GM12878 (cell line): ENCODE measurements at regions of chr4 and their contacts with region 1.

Region 1: DNA sequence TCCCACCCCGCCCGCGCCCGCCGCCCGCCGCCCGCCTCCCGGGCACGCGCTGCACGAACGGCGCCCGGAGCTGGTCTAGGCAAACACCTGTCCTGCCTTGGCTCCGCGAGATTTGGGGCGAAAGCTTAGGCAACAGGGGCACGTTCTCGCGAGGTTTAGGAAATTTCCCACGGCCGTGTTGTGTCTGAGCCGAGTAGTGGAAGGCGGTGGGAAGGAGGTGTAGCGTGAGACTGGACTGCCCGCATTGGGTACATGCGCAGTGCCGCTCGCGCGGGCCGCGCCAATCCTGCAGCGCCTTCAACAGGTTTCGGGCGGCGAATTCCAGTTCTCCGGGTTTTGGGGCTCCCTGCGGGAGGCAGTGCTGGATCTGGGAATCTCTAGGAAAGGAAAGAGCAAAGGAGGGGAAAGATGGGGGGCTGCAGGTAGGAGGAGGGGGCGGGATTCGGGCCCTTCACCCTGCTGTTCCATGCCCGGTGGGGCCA is 1.3 kb upstream of the RBPJ start:
- DNase-seq: peak; percentile 99
- ATAC-seq: peak; percentile 81
- H3K4me3 ChIP-seq: peak overlapping the region; percentile 94
- H3K27ac ChIP-seq: peak overlapping the region; percentile 97
- H3K4me1 ChIP-seq: no peaks in the 10 kb centered on the region
- H3K27me3 ChIP-seq: no peaks in the 10 kb centered on the region
- CTCF ChIP-seq: peak in 2 of 3 experiments; percentile 23 to 71; a peak in 3 of 6 replicates
- EP300 ChIP-seq: no peak
- POLR2A ChIP-seq: peak; percentile 74
- RAD21 ChIP-seq: no peak

Region 2: DNA sequence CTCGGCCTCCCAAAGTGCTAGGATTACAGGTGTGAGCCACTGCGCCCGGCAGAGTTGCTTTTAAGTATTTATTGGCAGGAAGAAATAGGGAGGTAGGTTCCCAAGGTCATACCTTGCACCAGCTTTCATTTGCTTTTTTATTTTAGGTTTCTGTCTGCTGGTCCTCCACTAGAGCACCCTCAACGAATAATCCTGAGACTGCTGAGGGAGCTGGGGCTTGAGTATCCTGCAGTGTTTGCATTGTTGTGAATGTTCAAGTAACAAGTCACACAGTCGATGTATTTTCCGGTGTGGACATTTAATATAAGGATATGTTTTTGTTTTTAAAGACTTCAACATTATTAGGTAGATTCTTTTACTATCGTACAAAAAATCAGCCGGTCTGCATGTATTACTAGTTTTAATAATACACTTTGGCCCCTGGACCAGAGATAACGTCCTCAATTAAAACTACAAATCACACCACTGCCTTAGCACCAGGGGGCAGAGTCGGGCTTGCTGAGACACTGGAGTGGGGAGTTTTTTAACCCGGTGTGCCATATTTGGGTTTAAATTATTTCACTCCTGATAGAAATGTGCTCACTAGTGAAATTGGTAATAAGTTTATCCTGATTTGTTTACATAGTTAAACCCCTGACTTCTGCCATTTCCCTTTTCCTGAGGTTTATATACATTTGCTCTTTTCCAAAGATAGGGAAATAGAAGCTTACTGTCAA is 393.9 kb before region 1 on chr4:
- CTCF ChIA-PET with region 1: interaction called, 3 read pairs
- POLR2A ChIA-PET with region 1: no interaction called
- RAD21 ChIA-PET with region 1: no interaction called
- SMC1A ChIA-PET with region 1: interaction called, 3 read pairs
- in situ Hi-C with region 1: no loop called
- intact Hi-C with region 1: loop called (anchors 5 kb)
- DNase-seq: no peak
- ATAC-seq: peak; percentile 94
- H3K4me3 ChIP-seq: no peak overlapping the region
- H3K27ac ChIP-seq: no peak overlapping the region
- H3K4me1 ChIP-seq: no peaks in the 10 kb centered on the region
- H3K27me3 ChIP-seq: no peaks in the 10 kb centered on the region
- CTCF ChIP-seq: peak; percentile 65 to 71 (median 69)
- EP300 ChIP-seq: no peak
- POLR2A ChIP-seq: no peak
- RAD21 ChIP-seq: peak; percentile 89

Region 3: DNA sequence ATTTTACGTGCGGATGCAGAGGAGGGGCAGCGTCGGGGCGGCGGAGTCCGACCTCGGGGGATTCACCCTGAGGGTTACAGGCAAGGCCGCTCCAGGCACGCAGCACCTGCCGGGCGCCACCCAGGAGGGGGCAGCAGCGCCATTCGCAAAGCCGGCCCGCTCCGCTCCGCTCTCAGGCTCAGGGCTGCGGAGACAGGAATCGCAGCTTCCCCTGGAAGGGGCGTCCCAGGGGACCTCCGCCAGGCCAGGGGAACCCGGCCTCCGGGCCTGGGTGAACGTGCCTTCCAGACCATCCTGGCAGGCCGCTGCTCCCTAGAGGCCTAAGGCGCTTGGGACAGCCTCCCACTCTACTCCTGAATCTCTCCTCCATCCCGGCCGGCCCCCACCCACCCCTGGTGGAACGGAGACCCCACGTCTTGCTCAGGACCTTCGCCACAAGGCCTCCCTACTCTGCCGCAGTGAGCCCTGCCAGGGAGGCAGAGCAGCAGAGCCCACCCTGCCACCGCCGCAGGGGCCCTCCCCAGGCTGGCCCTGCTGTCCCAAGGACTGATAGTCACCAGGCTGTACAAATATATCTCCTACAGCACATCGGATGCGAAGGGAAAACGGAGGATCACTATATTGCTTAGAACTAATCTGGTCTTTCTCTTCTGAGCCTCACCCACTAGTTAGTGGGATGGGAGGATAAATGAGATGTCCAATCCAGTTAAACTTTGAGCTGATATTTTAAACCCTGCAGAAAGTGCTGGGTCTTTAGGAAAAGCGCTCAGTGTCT is 290.5 kb before region 1 on chr4:
- CTCF ChIA-PET with region 1: interaction called, 3 read pairs
- POLR2A ChIA-PET with region 1: no interaction called
- RAD21 ChIA-PET with region 1: interaction called, 15 read pairs
- SMC1A ChIA-PET with region 1: interaction called, 6 read pairs
- in situ Hi-C with region 1: no loop called
- intact Hi-C with region 1: no loop called
- DNase-seq: no peak
- ATAC-seq: peak; percentile 99
- H3K4me3 ChIP-seq: no peak overlapping the region
- H3K27ac ChIP-seq: no peak overlapping the region
- H3K4me1 ChIP-seq: peaks cover 4% of the 10 kb centered on the region
- H3K27me3 ChIP-seq: no peaks in the 10 kb centered on the region
- CTCF ChIP-seq: peak; percentile 75 to 89 (median 85)
- EP300 ChIP-seq: no peak
- POLR2A ChIP-seq: no peak
- RAD21 ChIP-seq: peak; percentile 93

Region 4: DNA sequence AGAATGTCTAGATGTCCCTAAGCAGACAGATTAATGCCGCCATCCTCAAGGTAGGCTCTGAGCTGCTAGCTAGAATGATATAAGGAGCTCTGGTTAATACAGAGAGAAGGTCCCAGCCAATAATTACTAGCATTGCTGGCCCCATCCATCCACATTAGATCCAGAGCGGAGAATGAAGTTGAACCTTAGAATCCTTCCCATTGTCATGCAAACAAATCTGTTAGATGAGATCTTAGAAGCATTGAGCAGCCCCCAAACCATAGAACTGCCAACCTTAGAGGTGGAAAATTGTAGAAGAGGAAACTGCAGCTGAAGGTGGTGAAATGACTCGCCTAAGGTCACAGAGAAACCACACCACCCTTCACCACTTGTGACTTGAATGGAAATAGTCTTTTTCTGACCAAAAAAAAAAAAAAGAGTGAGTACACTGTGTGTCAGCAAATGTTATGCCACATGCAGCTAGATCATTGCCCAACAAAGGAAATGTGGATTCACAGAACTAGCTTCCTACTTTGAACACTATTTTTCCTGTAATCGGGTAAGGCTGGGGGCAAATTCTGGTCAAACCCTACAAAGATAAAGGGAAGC is 243.4 kb before region 1 on chr4:
- CTCF ChIA-PET with region 1: interaction called, 29 read pairs
- POLR2A ChIA-PET with region 1: interaction called, 7 read pairs
- RAD21 ChIA-PET with region 1: interaction called, 37 read pairs
- SMC1A ChIA-PET with region 1: interaction called, 24 read pairs
- in situ Hi-C with region 1: loop called (anchors 5 kb)
- intact Hi-C with region 1: no loop called
- DNase-seq: peak; percentile 84
- ATAC-seq: peak; percentile 75
- H3K4me3 ChIP-seq: no peak overlapping the region
- H3K27ac ChIP-seq: peak overlapping the region; percentile 57
- H3K4me1 ChIP-seq: peaks cover 35% of the 10 kb centered on the region
- H3K27me3 ChIP-seq: no peaks in the 10 kb centered on the region
- CTCF ChIP-seq: no peak
- EP300 ChIP-seq: peak; percentile 70 to 90
- POLR2A ChIP-seq: no peak
- RAD21 ChIP-seq: no peak

Region 5: DNA sequence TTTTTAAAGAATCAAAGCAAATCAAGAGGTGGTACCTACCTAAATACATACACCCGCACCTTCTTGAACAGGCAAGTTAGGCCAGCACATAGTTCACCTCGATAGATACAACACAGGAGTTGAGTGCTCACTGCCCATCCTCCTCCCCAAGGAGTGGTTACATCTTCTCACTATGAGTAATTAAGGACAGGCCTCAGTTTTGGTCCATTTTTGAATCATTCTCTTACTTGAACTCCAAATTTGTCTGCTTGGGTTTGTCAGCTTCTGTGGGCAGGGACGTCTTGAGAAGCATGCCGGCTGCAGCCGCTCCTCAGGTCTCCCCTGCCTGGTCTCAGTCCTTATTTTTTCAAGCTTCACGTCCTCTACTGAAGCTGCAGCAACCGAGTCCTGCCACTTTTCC is 189.3 kb before region 1 on chr4:
- CTCF ChIA-PET with region 1: no interaction called
- POLR2A ChIA-PET with region 1: no interaction called
- RAD21 ChIA-PET with region 1: interaction called, 6 read pairs
- SMC1A ChIA-PET with region 1: interaction called, 4 read pairs
- in situ Hi-C with region 1: loop called (anchors 5 kb)
- intact Hi-C with region 1: no loop called
- DNase-seq: peak; percentile 90
- ATAC-seq: peak; percentile 79
- H3K4me3 ChIP-seq: no peak overlapping the region
- H3K27ac ChIP-seq: peak overlapping the region; percentile 60
- H3K4me1 ChIP-seq: peaks cover 52% of the 10 kb centered on the region
- H3K27me3 ChIP-seq: no peaks in the 10 kb centered on the region
- CTCF ChIP-seq: no peak
- EP300 ChIP-seq: peak; percentile 78 to 79; a peak in 3 of 4 replicates
- POLR2A ChIP-seq: no peak
- RAD21 ChIP-seq: peak; percentile 30; the same call in 1 of the 2 replicates

Region 6: DNA sequence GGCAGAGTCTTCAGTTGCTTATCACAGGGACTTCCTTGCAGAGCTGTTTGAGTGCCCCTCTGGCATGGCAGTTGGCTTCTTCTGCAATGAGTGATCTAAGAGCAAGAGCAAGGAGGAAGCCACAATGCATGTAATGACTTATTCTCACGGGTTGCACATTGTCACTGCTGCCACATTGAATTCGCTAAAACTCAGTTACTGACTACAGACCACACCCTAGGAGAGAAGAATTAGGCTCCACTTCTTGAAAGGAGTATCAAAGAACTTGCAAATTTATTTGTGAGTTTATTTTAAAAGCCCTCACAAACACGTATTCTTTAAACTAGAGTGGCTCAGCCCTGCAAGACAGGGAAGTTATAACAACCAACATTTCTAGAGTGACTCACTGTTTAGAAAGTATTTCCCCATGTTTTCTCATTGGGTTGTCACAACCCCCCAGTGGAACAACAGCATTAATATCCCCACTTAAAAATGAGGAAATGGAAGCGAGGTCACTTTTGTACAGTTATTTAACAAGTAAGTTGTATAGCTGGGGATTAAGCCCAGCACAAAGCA is 31.1 kb before region 1 on chr4:
- CTCF ChIA-PET with region 1: interaction called, 4 read pairs
- POLR2A ChIA-PET with region 1: interaction called, 3 read pairs
- RAD21 ChIA-PET with region 1: interaction called, 11 read pairs
- SMC1A ChIA-PET with region 1: interaction called, 8 read pairs
- in situ Hi-C with region 1: no loop called
- intact Hi-C with region 1: loop called (anchors 1 kb)
- DNase-seq: peak; percentile 73
- ATAC-seq: peak; percentile 91
- H3K4me3 ChIP-seq: no peak overlapping the region
- H3K27ac ChIP-seq: peak overlapping the region; percentile 79
- H3K4me1 ChIP-seq: peaks cover 15% of the 10 kb centered on the region
- H3K27me3 ChIP-seq: no peaks in the 10 kb centered on the region
- CTCF ChIP-seq: no peak
- EP300 ChIP-seq: 0 out of 4 replicates have a peak, but pooled peaks of 1 of the 2 experiments have one; percentile 14
- POLR2A ChIP-seq: 0 out of 2 replicates have a peak, but pooled peaks have one; percentile 29
- RAD21 ChIP-seq: no peak

Region 7: GRCh38 chr4:26613237-26613636 is 293.7 kb after region 1 on chr4:
- CTCF ChIA-PET with region 1: no interaction called
- POLR2A ChIA-PET with region 1: no interaction called
- RAD21 ChIA-PET with region 1: no interaction called
- SMC1A ChIA-PET with region 1: no interaction called
- in situ Hi-C with region 1: no loop called
- intact Hi-C with region 1: no loop called
- DNase-seq: no peak
- ATAC-seq: no peak
- H3K4me3 ChIP-seq: no peak overlapping the region
- H3K27ac ChIP-seq: no peak overlapping the region
- H3K4me1 ChIP-seq: no peaks in the 10 kb centered on the region
- H3K27me3 ChIP-seq: no peaks in the 10 kb centered on the region
- CTCF ChIP-seq: no peak
- EP300 ChIP-seq: no peak
- POLR2A ChIP-seq: no peak
- RAD21 ChIP-seq: no peak